Naive thymus-derived CD8-positive, alpha-beta T cell (primary cell): ENCODE measurements at regions of chr7 and their contacts with region 1.

Region 1: GRCh38 chr7:135558337-135558767 is 635 bp downstream of the NUP205 start:
- DNase-seq: peak; percentile 40 to 73 (median 66)
- ATAC-seq: peak; percentile 63 to 70
- H3K4me3 Mint-ChIP-seq: no peak overlapping the region
- H3K27ac Mint-ChIP-seq: no peak overlapping the region
- H3K4me1 Mint-ChIP-seq: peaks cover 10 to 26% (median 20%) of the 10 kb centered on the region in 4 donors
- H3K27me3 Mint-ChIP-seq: no peaks in the 10 kb centered on the region

Region 2: GRCh38 chr7:135441791-135442190 is 116.6 kb before region 1 on chr7:
- POLR2A ChIA-PET with region 1: no interaction called
- DNase-seq: no peak
- ATAC-seq: no peak
- H3K4me3 Mint-ChIP-seq: no peak overlapping the region
- H3K27ac Mint-ChIP-seq: no peak overlapping the region
- H3K4me1 Mint-ChIP-seq: peaks cover 3 to 22% (median 11%) of the 10 kb centered on the region in 4 donors
- H3K27me3 Mint-ChIP-seq: no peaks in the 10 kb centered on the region

Region 3: DNA sequence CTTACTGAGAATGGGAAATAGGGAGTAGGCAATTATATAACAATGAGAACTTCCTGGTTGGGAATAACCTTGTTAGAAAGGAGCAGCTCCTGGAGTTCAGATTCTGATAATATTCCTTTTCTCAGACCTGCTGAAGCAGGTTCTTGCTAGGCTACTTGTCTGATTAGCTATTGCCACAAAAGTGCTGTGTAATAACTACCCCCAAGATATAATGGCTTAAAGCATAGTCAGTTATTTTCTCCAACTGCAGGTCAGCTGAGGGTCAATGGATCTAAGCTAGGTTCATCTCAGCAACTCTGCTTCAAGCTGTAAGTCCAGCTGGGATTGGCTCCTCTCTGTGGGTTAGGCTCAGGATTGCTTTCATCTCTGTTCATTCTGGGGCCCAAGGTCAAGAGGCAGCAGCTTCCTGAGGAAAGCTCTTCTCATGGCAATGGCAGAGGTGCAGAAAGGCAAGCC is 39.1 kb before region 1 on chr7:
- POLR2A ChIA-PET with region 1: no interaction called
- DNase-seq: no peak
- ATAC-seq: no peak
- H3K4me3 Mint-ChIP-seq: no peak overlapping the region
- H3K27ac Mint-ChIP-seq: no peak overlapping the region
- H3K4me1 Mint-ChIP-seq: no peaks in the 10 kb centered on the region
- H3K27me3 Mint-ChIP-seq: peaks cover 0 to 8% (median 0%) of the 10 kb centered on the region in 5 donors

Region 4: DNA sequence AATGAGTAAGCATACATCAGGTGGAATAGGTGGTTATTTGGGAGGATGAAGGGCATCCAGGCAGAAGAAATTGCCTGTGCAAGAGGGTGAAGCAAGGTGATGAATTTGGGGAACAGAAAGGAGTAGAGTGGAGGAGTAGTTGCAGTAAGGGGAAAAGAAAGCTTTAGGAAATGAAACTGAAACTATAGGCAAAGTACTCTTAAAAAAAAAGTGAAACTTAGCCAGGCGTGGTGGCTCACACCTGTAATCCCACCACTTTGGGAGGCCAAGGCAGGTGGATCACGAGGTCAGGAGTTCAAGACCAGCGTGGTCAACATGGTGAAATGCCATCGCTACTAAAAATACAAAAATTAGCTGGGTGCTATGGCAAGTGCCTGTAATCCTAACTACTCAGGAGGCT is 16.9 kb after region 1 on chr7:
- POLR2A ChIA-PET with region 1: interaction called, 10 read pairs
- DNase-seq: no peak
- ATAC-seq: no peak
- H3K4me3 Mint-ChIP-seq: no peak overlapping the region
- H3K27ac Mint-ChIP-seq: peak overlapping the region in 5 of 10 donors; percentile 22 to 74 (median 42)
- H3K4me1 Mint-ChIP-seq: peaks cover 4 to 12% (median 7%) of the 10 kb centered on the region in 4 donors
- H3K27me3 Mint-ChIP-seq: no peaks in the 10 kb centered on the region